Heart right ventricle (tissue), 16 donors: ENCODE measurements at regions of chr2 and their contacts with region 1.

Region 1: GRCh38 chr2:55961318-55961911 is 37.8 kb upstream of the EFEMP1 start:
- DNase-seq: peak in 1 of 2 donors; percentile 20
- ATAC-seq: peak in 4 of 8 donors; percentile 40 to 63 (median 46)
- H3K4me3 ChIP-seq: no peak overlapping the region
- H3K27ac ChIP-seq: no peak overlapping the region
- H3K4me1 ChIP-seq: peaks cover 0 to 18% (median 3%) of the 10 kb centered on the region in 9 donors
- H3K27me3 ChIP-seq: no peaks in the 10 kb centered on the region
- CTCF ChIP-seq: peak; percentile 14 to 68 (median 56)

Region 2: DNA sequence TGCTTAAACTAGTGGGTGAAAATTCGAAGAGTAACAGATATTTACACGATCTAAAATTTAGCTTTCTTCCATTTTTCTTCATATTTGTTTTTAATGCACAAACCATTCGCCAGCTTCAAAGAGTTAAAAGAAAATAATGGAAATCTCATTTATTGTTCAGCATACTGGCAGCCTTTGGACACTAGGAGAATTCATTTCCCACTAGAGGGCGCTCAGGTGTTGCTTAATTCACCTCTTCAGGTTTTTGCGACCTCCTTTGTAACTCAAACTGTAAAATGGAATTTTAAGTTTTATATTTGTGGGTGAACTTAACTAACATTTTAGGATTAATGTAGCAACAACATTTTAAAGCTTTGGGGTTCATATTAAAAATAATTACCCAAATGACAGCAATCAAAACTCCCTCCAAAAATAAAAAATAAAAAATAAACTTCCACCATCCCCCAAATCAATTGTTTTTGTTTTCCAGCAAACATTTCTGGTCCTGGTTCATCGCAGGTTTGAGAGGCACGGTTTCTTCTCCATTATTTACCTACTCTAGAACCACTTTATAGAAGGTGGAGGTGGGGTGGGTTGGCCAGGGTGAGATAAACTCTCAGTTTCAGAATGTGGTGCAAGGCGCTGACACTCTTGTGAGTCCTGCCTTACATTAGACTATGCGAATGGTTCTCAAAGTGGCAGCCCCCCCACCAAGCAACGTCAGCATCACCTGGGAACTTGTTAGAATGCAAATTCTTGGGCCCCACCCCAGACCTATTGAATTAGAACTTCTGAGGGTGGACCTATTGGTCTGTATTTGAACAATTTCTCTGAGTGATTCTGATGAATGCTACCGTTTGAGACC is 243.0 kb before region 1 on chr2:
- intact Hi-C with region 1: loop called in 1 of 10 experiments (anchors 5 kb)
- DNase-seq: peak in 1 of 2 donors; percentile 54
- ATAC-seq: peak in 1 of 8 donors; percentile 54
- H3K4me3 ChIP-seq: no peak overlapping the region
- H3K27ac ChIP-seq: no peak overlapping the region
- H3K4me1 ChIP-seq: no peaks in the 10 kb centered on the region
- H3K27me3 ChIP-seq: peaks cover 0 to 13% (median 0%) of the 10 kb centered on the region in 7 donors
- CTCF ChIP-seq: peak; percentile 59 to 87 (median 85)

Region 3: GRCh38 chr2:55761526-55761925 is 199.9 kb before region 1 on chr2:
- intact Hi-C with region 1: loop called in 3 of 10 experiments (anchors 2 to 10 kb)
- DNase-seq: no peak
- ATAC-seq: no peak
- H3K4me3 ChIP-seq: no peak overlapping the region
- H3K27ac ChIP-seq: no peak overlapping the region
- H3K4me1 ChIP-seq: no peaks in the 10 kb centered on the region
- H3K27me3 ChIP-seq: peaks cover 0 to 9% (median 0%) of the 10 kb centered on the region in 7 donors
- CTCF ChIP-seq: no peak

Region 4: DNA sequence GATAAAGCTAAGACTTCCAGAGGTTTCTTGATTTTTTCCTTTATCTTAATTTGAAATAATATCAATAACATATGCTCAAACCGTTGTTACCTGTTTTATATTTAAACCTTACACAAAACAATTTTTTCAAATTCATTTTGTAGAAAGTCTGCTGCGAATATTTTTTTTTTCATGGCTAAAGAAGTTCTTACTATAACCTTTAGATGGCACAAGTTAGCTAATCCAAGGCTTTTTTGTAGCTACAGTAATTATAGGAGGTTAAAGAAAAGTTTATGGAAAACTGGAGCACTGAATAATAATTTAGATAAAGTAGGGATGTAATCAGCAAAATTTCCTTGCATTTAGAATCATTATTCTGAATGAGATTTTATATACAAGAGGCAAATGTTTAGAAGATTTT is 189.8 kb before region 1 on chr2:
- intact Hi-C with region 1: loop called in 9 of 10 experiments (anchors 1 to 10 kb)
- DNase-seq: no peak
- ATAC-seq: no peak
- H3K4me3 ChIP-seq: no peak overlapping the region
- H3K27ac ChIP-seq: no peak overlapping the region
- H3K4me1 ChIP-seq: no peaks in the 10 kb centered on the region
- H3K27me3 ChIP-seq: peaks cover 0 to 10% (median 0%) of the 10 kb centered on the region in 7 donors
- CTCF ChIP-seq: peak; percentile 18 to 69 (median 64)

Region 5: DNA sequence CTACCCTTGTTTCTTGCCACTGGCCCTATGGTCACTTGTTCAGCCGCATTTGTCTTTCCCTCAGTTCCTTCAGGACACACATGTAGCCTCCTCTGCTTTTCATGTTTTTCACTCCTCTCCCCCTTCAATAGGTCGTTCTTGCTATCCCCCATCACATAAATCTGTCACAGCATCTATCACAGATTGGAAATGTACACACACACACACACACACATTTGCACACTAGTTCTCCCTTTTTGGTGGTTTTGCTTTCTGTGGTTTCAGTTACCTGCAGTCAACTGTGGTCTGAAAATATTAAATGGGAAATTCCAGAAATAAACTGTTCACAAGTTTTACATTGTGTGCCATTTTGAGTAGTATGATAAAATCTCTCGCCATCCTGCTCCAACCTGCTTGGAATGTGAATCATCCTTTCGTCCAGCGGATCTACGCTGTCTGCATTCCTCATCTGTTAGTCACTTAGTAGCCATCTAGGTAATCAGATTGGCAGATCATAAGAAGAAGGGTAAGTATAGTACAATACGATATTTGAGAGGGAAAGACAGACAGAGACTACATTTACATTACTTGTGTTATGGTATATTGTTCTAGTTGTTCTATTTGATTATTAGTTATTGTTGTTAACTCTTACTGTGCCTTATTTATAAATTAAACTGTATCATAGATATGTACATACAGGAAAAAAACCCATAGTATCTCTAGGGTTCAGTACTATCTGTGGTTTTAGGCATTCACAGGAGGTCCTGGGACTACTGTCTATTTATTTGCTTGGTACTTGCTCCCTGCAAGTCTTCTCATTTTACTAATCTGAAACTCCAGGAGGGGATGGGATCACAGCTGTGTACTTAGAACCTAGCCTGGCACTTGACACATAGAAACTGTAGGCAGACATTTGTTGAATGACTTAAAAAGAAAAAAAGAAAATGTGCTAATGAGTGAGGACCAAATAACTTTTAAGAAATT is 181.7 kb before region 1 on chr2:
- intact Hi-C with region 1: loop called in 4 of 10 experiments (anchors 5 kb)
- DNase-seq: no peak
- ATAC-seq: no peak
- H3K4me3 ChIP-seq: no peak overlapping the region
- H3K27ac ChIP-seq: no peak overlapping the region
- H3K4me1 ChIP-seq: no peaks in the 10 kb centered on the region
- H3K27me3 ChIP-seq: no peaks in the 10 kb centered on the region
- CTCF ChIP-seq: no peak

Region 6: DNA sequence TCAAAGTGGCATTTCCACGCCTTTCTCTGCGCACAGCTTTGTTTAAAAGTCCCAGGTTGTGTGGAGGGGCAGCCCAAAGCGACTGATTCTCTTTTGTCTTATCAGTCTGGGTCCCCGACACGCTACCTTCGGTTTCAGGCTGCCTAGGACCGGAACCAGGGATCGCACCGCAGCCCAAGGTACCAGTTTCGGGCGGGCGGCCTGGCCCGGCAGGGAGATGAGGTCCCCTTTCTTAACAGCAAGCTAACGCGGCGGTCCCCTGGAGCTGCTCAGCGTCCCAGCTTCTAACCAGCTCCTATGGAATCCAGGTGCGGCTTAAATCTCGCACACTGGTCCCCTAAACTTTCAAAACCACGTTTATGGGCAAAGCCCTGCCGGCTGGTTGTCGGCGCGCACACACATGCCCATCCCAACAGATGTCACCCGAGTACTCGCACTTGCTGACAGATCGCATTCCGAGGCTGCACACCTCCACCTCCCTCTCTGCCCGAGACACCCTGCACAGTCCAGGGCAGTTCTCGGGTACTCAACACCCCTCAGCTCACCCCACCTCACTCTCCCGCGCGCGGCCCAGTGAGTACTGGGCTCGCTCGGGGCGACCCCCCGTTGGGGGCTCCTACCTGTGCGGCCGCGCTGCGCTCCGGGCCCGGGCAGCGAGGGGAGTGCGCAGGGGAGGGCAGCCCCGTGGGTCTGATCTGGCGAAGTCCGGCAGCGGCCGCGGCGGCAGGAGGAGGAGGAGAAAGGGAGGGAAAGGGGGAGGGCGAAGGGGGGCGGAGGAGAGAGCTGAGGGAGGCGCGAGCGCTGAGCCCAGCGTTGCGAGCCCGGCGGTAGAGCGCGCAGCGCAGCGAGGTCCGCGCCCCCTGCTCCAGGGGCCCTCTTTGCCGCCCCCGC is 38.1 kb before region 1 on chr2 and contains the start of gene EFEMP1:
- intact Hi-C with region 1: loop called in 1 of 10 experiments (anchors 2 kb)
- DNase-seq: peak; percentile 52 to 64
- ATAC-seq: peak; percentile 73 to 94 (median 90)
- H3K4me3 ChIP-seq: peak within 1 kb of the TSS; percentile 42 to 70 (median 62)
- H3K27ac ChIP-seq: peak within 1 kb of the TSS in 7 of 10 donors; percentile 17 to 76 (median 50)
- H3K4me1 ChIP-seq: peaks cover 0 to 14% (median 6%) of the 10 kb centered on the region in 9 donors
- H3K27me3 ChIP-seq: peaks cover 0 to 49% (median 26%) of the 10 kb centered on the region in 7 donors
- CTCF ChIP-seq: no peak
- total RNA-seq, gene EFEMP1: 18.6 to 157 (median 32.5) TPM

Region 7: DNA sequence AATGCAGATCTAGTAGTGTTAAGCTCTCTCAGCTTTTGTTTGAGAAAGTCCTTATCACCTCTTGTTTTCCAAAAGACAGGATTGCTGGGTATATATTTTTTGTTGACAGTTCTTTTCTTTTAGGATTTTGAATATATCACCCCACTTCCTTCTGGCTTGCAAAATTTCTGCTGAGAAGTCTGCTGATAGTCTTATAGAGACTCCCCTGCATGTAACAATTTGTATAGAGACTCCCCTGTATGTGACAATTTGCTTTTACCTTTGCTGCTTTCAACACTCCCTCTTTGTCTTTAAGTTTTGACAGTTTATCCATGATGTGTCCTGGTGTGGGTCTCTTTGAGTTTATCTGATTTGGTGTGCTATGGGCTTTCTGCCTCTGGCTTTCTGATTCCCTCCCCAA is 107.3 kb after region 1 on chr2:
- intact Hi-C with region 1: no loop called
- DNase-seq: no peak
- ATAC-seq: no peak
- H3K4me3 ChIP-seq: no peak overlapping the region
- H3K27ac ChIP-seq: no peak overlapping the region
- H3K4me1 ChIP-seq: no peaks in the 10 kb centered on the region
- H3K27me3 ChIP-seq: no peaks in the 10 kb centered on the region
- CTCF ChIP-seq: no peak